Activated CD8-positive, alpha-beta T cell treated with anti-CD3 and anti-CD28 coated beads, Interleukin-2, amount 10 ng/mL, durations not matched to agents 7 days and 5 days (primary cell): ENCODE measurements at regions of chr3 and their contacts with region 1.

Region 1: DNA sequence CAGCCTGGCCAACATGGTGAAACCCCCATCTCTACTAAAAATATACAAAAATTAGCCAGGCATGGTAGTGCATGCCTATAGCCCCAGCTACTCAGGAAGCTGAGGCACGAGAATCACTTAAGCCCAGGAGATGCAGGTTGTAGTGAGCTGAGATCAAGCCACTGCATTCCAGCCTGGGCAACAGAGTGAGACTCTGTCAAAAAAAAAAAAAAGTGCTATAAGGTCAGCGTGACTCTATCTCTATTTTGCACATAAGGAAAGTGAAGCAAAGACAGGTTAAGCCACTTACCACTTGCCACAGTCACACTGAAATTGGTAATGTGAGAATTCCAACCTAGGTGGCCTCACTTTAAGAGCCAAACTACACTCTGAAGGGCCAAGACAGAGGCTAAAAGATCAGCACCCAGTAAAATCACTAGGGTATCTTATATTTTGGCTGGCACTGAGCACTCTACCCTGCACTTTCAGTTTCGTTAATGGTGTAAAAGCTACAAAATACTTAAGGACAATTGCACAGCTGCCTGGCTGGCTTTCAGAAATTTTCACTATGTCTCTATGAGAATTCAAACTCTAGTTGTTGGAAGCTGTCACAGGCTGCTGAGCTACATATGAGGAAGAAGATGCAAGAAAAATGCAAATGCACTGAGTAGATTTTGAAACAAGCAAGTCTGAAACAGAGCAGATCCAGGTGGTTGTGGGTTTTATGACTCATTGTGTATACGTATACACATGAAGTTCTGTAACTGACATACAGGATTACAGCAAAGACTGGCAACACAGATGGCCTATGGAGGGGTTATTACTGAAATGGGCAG is 32.7 kb downstream of the TRANK1 start:
- DNase-seq: peak; percentile 65
- ATAC-seq: peak; percentile 86
- H3K4me3 Mint-ChIP-seq: peak overlapping the region; percentile 76
- H3K27ac Mint-ChIP-seq: peak overlapping the region; percentile 93
- H3K4me1 Mint-ChIP-seq: peaks cover 36% of the 10 kb centered on the region
- H3K27me3 Mint-ChIP-seq: no peaks in the 10 kb centered on the region

Region 2: DNA sequence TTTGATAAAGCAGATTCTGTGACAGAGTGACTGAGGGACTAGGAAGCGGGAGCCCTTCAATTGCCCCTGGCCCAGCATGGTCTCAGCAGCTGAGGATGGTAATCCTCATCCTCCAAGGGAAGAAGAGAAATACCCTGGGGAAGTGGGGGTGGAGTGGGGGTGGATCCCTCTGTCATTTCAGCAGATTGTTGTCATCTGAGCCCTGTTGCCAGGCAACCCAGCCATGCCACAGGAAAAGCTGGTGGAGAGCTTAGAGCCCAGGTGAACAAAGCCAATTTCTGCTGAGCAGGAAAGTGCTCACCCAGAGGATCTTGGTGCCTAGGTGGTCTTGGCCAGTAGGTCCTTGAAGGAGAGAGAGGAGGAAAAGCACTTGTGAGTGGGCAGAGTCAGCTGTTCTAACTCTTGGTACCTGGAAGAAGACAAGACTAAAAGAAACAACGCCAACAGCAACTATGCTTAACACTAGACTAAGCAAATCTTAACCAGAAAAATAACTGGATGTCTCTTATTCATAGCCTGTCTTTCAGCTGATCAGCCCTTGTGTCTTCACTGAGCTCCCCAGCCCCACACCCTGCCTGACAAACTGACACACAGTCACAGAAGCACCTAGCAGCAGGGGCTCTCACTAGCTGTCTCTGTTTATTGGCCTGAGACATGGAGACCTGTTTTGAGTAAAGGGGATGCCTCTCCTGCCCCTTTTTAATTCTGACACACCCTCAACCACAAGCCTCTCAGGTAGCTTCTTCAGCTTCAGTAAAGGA is 107.7 kb before region 1 on chr3:
- CTCF ChIA-PET with region 1: no interaction called
- POLR2A ChIA-PET with region 1: no interaction called
- DNase-seq: no peak
- ATAC-seq: no peak
- H3K4me3 Mint-ChIP-seq: no peak overlapping the region
- H3K27ac Mint-ChIP-seq: no peak overlapping the region
- H3K4me1 Mint-ChIP-seq: no peaks in the 10 kb centered on the region
- H3K27me3 Mint-ChIP-seq: peaks cover 20% of the 10 kb centered on the region

Region 3: DNA sequence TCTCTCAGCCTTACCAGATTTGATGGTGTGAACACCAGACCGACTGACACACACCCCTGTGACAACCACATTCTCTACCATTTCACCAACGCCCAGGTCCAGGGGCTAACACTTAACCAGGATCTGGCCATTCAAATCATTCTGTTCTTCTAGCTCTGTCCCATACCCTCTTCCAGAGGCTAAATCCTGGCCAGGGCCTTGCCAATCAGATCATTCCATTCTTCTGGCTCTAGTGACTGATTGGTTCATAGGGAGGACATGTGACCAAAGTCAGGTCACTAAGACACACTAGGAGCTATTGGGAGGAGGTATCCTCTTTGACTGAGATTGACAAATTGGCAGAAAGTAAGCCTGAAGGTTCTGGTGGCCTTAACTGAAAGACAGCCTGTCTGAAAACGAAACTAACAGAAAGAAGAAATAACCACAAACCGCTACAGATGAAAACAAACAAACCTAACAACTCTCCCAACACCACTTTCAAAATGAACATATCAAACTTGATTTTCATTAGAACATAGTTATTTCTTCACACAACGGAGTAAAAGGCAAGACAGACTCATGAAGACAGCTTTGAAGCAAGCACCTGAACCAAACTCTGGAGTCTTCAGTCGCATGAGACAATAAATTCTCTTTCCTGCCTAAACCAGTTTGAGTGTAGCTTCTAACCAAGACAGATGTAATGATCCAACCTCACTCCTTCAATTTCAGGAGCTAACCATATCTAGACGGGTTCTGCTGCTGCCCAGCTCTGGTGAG is 35.8 kb before region 1 on chr3:
- CTCF ChIA-PET with region 1: interaction called, 23 read pairs
- POLR2A ChIA-PET with region 1: interaction called, 16 read pairs
- DNase-seq: peak; percentile 56
- ATAC-seq: peak; percentile 96
- H3K4me3 Mint-ChIP-seq: peak overlapping the region; percentile 68
- H3K27ac Mint-ChIP-seq: peak overlapping the region; percentile 96
- H3K4me1 Mint-ChIP-seq: peaks cover 36% of the 10 kb centered on the region
- H3K27me3 Mint-ChIP-seq: no peaks in the 10 kb centered on the region

Region 4: GRCh38 chr3:36944012-36944640 is 31.9 kb after region 1 on chr3:
- CTCF ChIA-PET with region 1: interaction called, 7 read pairs
- POLR2A ChIA-PET with region 1: interaction called, 21 read pairs
- DNase-seq: peak; percentile 34
- ATAC-seq: peak; percentile 60
- H3K4me3 Mint-ChIP-seq: peak overlapping the region; percentile 78
- H3K27ac Mint-ChIP-seq: peak overlapping the region; percentile 75
- H3K4me1 Mint-ChIP-seq: peaks cover 20% of the 10 kb centered on the region
- H3K27me3 Mint-ChIP-seq: no peaks in the 10 kb centered on the region

Region 5: DNA sequence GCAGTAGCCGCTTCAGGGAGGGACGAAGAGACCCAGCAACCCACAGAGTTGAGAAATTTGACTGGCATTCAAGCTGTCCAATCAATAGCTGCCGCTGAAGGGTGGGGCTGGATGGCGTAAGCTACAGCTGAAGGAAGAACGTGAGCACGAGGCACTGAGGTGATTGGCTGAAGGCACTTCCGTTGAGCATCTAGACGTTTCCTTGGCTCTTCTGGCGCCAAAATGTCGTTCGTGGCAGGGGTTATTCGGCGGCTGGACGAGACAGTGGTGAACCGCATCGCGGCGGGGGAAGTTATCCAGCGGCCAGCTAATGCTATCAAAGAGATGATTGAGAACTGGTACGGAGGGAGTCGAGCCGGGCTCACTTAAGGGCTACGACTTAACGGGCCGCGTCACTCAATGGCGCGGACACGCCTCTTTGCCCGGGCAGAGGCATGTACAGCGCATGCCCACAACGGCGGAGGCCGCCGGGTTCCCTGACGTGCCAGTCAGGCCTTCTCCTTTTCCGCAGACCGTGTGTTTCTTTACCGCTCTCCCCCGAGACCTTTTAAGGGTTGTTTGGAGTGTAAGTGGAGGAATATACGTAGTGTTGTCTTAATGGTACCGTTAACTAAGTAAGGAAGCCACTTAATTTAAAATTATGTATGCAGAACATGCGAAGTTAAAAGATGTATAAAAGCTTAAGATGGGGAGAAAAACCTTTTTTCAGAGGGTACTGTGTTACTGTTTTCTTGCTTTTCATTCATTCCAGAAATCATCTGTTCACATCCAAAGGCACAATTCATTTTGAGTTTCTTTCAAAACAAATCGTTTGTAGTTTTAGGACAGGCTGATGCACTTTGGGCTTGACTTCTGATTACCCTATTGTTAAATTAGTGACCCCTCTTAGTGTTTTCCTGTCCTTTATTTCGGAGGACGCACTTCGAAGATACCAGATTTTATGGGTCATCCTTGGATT is 81.4 kb after region 1 on chr3 and contains the start of gene MLH1:
- CTCF ChIA-PET with region 1: no interaction called
- POLR2A ChIA-PET with region 1: interaction called, 24 read pairs
- DNase-seq: peak; percentile 95
- ATAC-seq: peak; percentile 91
- H3K4me3 Mint-ChIP-seq: no peak within 1 kb of the TSS
- H3K27ac Mint-ChIP-seq: no peak within 1 kb of the TSS
- H3K4me1 Mint-ChIP-seq: peaks cover 42% of the 10 kb centered on the region
- H3K27me3 Mint-ChIP-seq: no peaks in the 10 kb centered on the region
- total RNA-seq, gene MLH1: 60.9 to 65.3 TPM